Upper lobe of right lung (tissue), 1 donor: ENCODE measurements at regions of chr3 and their contacts with region 1.

Region 1: GRCh38 chr3:128572644-128573105 is 77.9 kb downstream of the RPN1 start:
- DNase-seq: no peak
- ATAC-seq: no peak
- H3K4me3 ChIP-seq: no peak overlapping the region
- H3K27ac ChIP-seq: no peak overlapping the region
- H3K4me1 ChIP-seq: peaks cover 9% of the 10 kb centered on the region
- H3K27me3 ChIP-seq: peaks cover 16% of the 10 kb centered on the region
- CTCF ChIP-seq: peak; percentile 11

Region 2: GRCh38 chr3:128497387-128498126 is 75.1 kb before region 1 on chr3:
- intact Hi-C with region 1: loop called (anchors 10 kb)
- DNase-seq: peak; percentile 79
- ATAC-seq: peak; percentile 66
- H3K4me3 ChIP-seq: peak overlapping the region; percentile 46
- H3K27ac ChIP-seq: no peak overlapping the region
- H3K4me1 ChIP-seq: peaks cover 9% of the 10 kb centered on the region
- H3K27me3 ChIP-seq: peaks cover 89% of the 10 kb centered on the region
- CTCF ChIP-seq: peak; percentile 58